ENCODE measurements at regions of chr5 and their contacts with region 1.

Region 1: GRCh38 chr5:52693280-52693679 is 94.4 kb upstream of the ITGA1 start:
- DNase-seq: peak; percentile 31 to 58
- ATAC-seq: peak; percentile 57 to 88 (median 80)
- H3K4me3 ChIP-seq: no peak overlapping the region
- H3K27ac ChIP-seq: peak overlapping the region in 4 of 10 donors; percentile 5 to 73 (median 41)
- H3K4me1 ChIP-seq: peaks cover 0 to 64% (median 26%) of the 10 kb centered on the region in 9 donors
- H3K27me3 ChIP-seq: no peaks in the 10 kb centered on the region
- CTCF ChIP-seq: peak; percentile 51 to 88 (median 69)

Region 2: DNA sequence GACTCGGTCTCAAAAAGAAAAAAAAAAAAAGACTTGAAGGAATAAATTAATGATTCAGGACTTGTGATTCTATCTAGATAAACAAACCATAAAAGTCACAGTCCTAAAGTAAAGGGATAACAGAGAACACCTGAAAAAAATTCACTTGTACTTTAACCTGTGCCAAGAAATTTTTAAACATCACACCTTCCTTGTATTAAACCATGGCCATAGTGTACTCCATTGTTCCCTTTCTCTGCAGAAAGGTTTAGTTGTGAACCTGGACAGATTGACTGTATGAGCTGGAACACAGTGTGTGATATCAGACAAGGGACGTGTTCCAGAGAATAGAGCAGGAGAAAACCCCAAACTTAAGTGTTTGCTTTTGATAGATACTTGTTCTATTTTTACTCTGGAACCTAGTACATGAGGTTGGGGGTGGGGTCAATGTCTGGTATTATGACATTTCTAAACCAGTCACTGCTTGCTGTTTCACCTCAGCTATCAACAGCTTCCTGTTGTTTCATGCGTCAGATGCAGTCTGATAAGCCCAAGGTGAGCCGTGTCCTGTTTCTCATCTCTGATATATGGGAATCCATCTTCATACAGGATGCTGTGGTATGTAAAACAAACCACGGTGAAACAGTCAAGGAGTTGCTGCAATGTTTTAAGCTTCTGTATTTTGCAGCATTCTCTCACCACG is 31.9 kb after region 1 on chr5:
- intact Hi-C with region 1: loop called in 1 of 10 experiments (anchors 5 kb)
- DNase-seq: peak in 1 of 2 donors; percentile 12
- ATAC-seq: peak in 7 of 8 donors; percentile 45 to 72 (median 56)
- H3K4me3 ChIP-seq: no peak overlapping the region
- H3K27ac ChIP-seq: peak overlapping the region in 8 of 10 donors; percentile 15 to 79 (median 58)
- H3K4me1 ChIP-seq: peaks cover 0 to 45% (median 36%) of the 10 kb centered on the region in 9 donors
- H3K27me3 ChIP-seq: no peaks in the 10 kb centered on the region
- CTCF ChIP-seq: no peak

Region 3: DNA sequence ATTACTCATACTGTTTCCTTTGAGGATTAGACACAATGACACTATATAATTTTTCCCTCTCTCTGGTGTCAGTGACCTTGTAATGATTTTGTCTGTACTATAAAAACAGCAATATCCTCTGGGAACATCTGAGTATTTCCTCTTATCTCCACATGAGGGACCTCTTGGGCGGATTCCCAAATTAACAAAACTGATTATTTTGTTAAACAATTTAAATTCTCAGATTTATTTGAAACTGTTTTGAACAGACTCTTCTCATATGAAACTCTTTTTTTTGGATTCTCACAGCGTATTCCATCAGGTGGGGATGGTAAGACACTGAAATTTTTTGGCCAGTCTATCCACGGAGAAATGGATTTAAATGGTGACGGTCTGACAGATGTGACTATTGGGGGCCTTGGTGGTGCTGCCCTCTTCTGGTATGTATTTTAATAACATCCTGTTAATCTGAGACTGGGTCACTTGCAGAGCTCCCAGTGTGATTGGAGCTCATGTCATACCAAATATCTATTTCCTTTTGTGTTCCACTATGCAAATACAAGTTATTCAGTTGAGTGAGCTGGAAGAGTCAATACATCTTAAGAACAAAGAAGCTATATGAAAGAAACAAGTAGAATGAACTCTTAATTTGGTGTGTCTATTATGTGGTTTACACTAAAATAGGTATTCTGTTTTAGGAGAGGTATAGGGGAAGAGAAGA is 222.0 kb after region 1 on chr5:
- intact Hi-C with region 1: loop called in 8 of 10 experiments (anchors 1 to 10 kb)
- DNase-seq: peak; percentile 8 to 70
- ATAC-seq: peak; percentile 76 to 95 (median 92)
- H3K4me3 ChIP-seq: peak overlapping the region in 6 of 10 donors; percentile 2 to 39 (median 24)
- H3K27ac ChIP-seq: peak overlapping the region in 6 of 10 donors; percentile 1 to 58 (median 28)
- H3K4me1 ChIP-seq: peaks cover 0 to 23% (median 7%) of the 10 kb centered on the region in 9 donors
- H3K27me3 ChIP-seq: no peaks in the 10 kb centered on the region
- CTCF ChIP-seq: peak; percentile 70 to 88 (median 80)

Region 4: DNA sequence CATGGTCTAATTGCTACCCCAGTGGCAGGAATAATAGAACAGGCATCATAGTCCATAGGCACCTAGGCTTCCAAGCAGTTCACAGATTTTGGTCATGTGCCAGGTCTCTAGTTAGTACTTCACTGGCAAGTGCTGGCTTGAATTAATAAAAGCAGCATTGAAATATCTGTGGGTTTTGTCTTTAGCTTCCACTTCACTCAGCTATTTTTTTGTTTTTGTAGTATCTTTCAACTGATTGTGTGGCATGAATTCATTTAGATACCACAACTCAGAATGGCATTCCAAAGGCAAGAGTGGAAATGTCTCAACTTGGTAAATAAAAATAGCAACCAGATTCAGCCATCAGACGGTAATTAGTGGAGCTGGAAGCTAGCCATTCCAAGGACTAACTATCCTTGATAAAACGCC is 268.0 kb after region 1 on chr5:
- intact Hi-C with region 1: no loop called
- DNase-seq: no peak
- ATAC-seq: peak in 3 of 8 donors; percentile 55 to 73 (median 57)
- H3K4me3 ChIP-seq: no peak overlapping the region
- H3K27ac ChIP-seq: no peak overlapping the region
- H3K4me1 ChIP-seq: peaks cover 0 to 7% (median 0%) of the 10 kb centered on the region in 9 donors
- H3K27me3 ChIP-seq: no peaks in the 10 kb centered on the region
- CTCF ChIP-seq: no peak

Measured in heart right ventricle (tissue), 16 donors.